PC-9 (cell line): ENCODE measurements at regions of chr2 and their contacts with region 1.

Region 1: GRCh38 chr2:72993147-72993932 is 76.0 kb downstream of the EMX1 start:
- DNase-seq: peak in 1 of 2 experiments; percentile 30
- H3K4me3 ChIP-seq: no peak overlapping the region
- H3K27ac ChIP-seq: no peak overlapping the region
- H3K4me1 ChIP-seq: no peaks in the 10 kb centered on the region
- H3K27me3 ChIP-seq: no peaks in the 10 kb centered on the region
- CTCF ChIP-seq: peak; percentile 97

Region 2: DNA sequence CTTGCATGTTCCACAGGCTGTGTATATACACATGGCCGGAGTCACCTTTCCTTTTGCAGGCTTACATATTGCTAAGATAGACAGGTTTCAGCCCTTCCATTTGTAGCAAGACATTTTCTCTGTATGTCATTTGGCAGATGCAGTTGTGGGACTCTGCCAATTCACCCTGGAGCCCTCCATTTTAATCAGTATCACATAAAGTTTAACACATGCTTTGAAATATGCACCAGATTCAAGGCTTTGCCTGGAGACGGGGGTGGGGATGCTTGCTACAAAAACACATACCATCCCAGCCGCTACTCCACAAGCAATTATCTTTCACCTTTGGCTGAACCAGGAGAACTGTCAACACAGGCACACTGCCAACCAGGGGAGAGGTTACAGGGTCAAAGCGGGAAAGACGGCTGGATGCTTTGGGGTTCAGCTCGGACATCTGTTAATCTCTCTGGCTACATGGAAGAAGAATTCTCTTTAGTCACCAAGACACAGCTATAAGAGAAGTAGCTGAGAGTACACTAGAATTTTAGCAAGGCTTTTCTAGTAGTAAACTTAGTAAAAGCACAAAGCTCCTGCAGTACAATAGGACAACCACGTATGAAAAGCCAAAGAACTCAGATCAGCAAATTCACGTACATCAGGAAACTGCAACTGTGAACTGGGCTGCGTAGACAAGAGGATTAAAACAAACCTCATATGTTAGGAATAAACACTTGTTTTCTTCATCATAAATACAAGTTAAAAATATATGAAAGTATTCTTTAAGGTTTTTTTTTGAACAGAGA is 298.4 kb before region 1 on chr2:
- CTCF ChIA-PET with region 1: no interaction called
- POLR2A ChIA-PET with region 1: no interaction called
- intact Hi-C with region 1: no loop called
- DNase-seq: peak in 1 of 2 experiments; percentile 29
- H3K4me3 ChIP-seq: no peak overlapping the region
- H3K27ac ChIP-seq: no peak overlapping the region
- H3K4me1 ChIP-seq: peaks cover 16% of the 10 kb centered on the region
- H3K27me3 ChIP-seq: no peaks in the 10 kb centered on the region
- CTCF ChIP-seq: no peak

Region 3: GRCh38 chr2:72973566-72974435 is 19.5 kb before region 1 on chr2:
- CTCF ChIA-PET with region 1: no interaction called
- POLR2A ChIA-PET with region 1: no interaction called
- intact Hi-C with region 1: no loop called
- DNase-seq: peak; percentile 41
- H3K4me3 ChIP-seq: no peak overlapping the region
- H3K27ac ChIP-seq: no peak overlapping the region
- H3K4me1 ChIP-seq: no peaks in the 10 kb centered on the region
- H3K27me3 ChIP-seq: no peaks in the 10 kb centered on the region
- CTCF ChIP-seq: peak; percentile 93

Region 4: DNA sequence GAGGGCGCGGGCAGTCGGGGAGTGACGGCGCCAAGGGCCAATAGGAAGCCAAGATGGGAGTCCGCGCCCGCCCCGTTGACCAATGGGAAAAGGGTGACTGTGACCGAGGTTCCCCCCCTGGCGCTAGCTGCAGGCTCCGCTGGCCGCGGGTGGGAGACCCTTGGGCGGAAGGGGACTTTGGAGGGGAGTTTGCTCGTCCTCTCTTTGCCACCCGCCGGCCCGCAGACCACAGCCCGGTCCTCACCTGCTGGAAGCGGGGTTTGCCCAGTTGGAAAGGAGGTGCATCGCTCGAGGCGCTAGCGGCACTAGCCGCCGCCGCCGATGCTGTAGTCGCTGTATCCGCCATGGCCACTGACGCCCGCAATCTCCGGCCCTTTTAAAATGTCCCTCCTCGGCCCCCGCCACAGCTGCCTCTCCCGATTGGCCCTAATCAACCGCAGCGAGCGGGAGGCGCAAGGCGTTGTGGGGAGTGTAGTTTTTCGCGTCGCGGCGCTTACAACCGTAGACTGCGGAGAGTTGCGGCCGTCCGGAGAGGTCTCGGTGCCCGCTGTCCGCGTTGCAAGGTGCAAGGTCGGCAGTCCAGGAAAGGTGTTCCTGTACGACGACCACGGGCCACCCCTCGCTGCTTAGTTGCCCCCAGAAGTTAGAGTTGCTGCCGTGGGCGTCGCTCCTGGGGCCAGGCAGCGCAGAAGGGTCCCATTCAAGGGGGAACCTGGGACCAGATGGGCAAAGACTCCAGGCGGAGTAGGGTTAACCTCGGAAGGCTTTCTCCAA is 78.2 kb after region 1 on chr2 and contains the start of gene SFXN5:
- CTCF ChIA-PET with region 1: interaction called, 3 read pairs
- POLR2A ChIA-PET with region 1: no interaction called
- intact Hi-C with region 1: loop called (anchors 5 kb)
- DNase-seq: peak; percentile 80 to 97
- H3K4me3 ChIP-seq: peak within 1 kb of the TSS; percentile 99
- H3K27ac ChIP-seq: peak within 1 kb of the TSS; percentile 43
- H3K4me1 ChIP-seq: peaks cover 11% of the 10 kb centered on the region
- H3K27me3 ChIP-seq: no peaks in the 10 kb centered on the region
- CTCF ChIP-seq: peak; percentile 18; the same call in 1 of the 2 replicates
- total RNA-seq, gene SFXN5: 12.5 and 15.2 TPM in 2 replicates

Region 5: DNA sequence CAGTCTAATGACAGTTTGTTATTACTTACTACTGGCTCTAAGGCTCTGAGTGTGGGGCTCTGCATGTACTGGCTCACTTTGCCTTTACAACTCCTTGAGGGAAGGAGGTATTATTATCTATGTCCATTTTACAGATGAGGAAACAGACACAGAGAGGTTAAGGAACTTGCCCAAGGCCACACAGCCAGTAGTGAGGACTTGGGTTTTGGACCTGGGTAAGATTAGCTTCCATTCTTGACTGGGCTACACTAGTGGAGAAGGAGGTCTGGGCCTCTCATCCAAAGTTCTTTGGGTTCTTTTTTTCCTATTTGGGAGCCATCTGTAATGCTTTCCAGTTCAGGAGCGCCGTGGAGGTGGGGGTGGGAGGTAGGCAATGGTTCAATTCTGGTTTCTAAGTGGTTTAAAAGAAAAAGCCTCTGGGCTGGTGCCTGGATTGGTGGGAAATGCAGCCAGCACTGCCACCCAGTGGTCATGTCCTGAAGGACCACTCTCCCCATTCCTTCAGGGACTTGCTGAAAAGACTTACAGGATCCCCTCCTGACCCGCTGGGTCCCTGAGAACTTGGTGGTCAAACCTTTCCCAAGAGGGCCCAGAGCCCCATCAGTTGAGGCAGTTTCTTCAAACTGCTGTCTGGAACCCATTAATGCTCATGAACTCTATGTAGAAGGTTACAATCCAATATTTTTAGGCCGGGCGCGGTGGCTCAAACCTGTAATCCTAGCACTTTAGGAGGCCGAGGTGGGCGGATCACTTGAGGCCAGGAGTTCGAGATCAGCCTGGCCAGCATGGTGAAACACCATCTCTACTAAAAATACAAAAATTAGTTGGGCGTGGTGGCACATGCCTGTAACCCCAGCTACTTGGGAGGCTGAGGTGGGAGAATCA is 170.4 kb after region 1 on chr2:
- CTCF ChIA-PET with region 1: interaction called, 6 read pairs
- POLR2A ChIA-PET with region 1: no interaction called
- intact Hi-C with region 1: loop called (anchors 1 kb)
- DNase-seq: peak; percentile 48 to 68
- H3K4me3 ChIP-seq: no peak overlapping the region
- H3K27ac ChIP-seq: no peak overlapping the region
- H3K4me1 ChIP-seq: no peaks in the 10 kb centered on the region
- H3K27me3 ChIP-seq: peaks cover 13% of the 10 kb centered on the region; the same call in 1 of the 2 replicates
- CTCF ChIP-seq: peak; percentile 93

Region 6: GRCh38 chr2:73176881-73177644 is 183.7 kb after region 1 on chr2:
- CTCF ChIA-PET with region 1: no interaction called
- POLR2A ChIA-PET with region 1: no interaction called
- intact Hi-C with region 1: loop called (anchors 1 kb)
- DNase-seq: peak; percentile 63 to 83
- H3K4me3 ChIP-seq: peak overlapping the region; percentile 61
- H3K27ac ChIP-seq: no peak overlapping the region
- H3K4me1 ChIP-seq: peaks cover 19% of the 10 kb centered on the region
- H3K27me3 ChIP-seq: peaks cover 55% of the 10 kb centered on the region
- CTCF ChIP-seq: peak; percentile 99